AG04450 (cell line): ENCODE measurements at regions of chr3 and their contacts with region 1.

Region 1: GRCh38 chr3:38152609-38153008 is 12.7 kb upstream of the OXSR1 start:
- DNase-seq: no peak
- H3K4me3 ChIP-seq: no peak overlapping the region
- H3K27ac ChIP-seq: no peak overlapping the region
- H3K27me3 ChIP-seq: no peaks in the 10 kb centered on the region
- CTCF ChIP-seq: no peak

Region 2: DNA sequence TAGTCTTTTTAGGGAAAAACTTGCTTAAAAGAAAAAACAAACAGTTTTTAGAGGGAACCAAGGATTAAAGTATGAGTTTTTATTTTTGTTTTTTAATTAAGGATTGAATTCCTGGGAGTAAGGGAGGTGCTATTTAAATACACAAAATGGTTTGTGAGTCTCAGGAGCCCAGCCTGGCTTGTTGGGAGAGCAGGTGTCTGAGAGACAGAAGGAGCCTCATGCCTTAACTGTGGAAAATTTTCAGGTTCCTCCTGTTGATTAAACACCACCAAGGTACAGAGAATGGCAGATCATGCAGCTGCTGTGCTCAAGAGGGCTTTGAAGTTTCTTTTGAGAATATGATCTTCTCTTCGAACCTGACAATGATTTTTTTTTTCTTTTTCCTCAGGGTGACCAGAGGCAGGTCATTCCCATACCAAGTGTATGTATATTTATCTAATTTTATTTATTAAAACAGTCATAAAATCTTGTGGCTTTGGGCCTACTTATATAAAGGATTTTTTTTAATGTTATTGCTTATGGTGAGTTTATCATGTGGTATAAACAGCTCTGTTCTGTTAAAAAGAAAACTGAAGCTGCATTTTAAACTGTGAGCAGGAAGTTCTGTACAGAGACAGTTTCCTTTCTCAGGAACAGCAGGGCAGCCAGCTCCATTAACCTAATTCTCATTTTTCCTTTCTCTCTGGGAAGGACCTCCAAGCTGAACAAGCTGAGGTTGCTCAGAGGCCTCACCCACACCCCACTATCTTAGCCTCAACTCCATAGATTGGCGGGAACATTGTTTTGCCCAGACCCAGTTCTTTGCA is 195.7 kb before region 1 on chr3:
- CTCF ChIA-PET with region 1: no interaction called
- POLR2A ChIA-PET with region 1: no interaction called
- DNase-seq: no peak
- H3K4me3 ChIP-seq: no peak overlapping the region
- H3K27ac ChIP-seq: no peak overlapping the region
- H3K27me3 ChIP-seq: no peaks in the 10 kb centered on the region
- CTCF ChIP-seq: no peak

Region 3: GRCh38 chr3:38205472-38205805 is 52.8 kb after region 1 on chr3:
- CTCF ChIA-PET with region 1: interaction called, 16 read pairs
- POLR2A ChIA-PET with region 1: no interaction called
- DNase-seq: no peak
- H3K4me3 ChIP-seq: no peak overlapping the region
- H3K27ac ChIP-seq: no peak overlapping the region
- H3K27me3 ChIP-seq: no peaks in the 10 kb centered on the region
- CTCF ChIP-seq: no peak